ENCODE measurements at regions of chr17 and their contacts with region 1.

Region 1: GRCh38 chr17:77322514-77323412 is 182.0 kb downstream of the SEC14L1 start:
- DNase-seq: peak; percentile 97
- H3K4me3 ChIP-seq: peak overlapping the region; percentile 72
- CTCF ChIP-seq: no peak

Region 2: GRCh38 chr17:77285520-77286390 is 37.0 kb before region 1 on chr17:
- CTCF ChIA-PET with region 1: interaction called, 3 read pairs
- POLR2A ChIA-PET with region 1: interaction called, 38 read pairs
- DNase-seq: peak; percentile 89
- H3K4me3 ChIP-seq: no peak overlapping the region
- CTCF ChIP-seq: no peak

Region 3: DNA sequence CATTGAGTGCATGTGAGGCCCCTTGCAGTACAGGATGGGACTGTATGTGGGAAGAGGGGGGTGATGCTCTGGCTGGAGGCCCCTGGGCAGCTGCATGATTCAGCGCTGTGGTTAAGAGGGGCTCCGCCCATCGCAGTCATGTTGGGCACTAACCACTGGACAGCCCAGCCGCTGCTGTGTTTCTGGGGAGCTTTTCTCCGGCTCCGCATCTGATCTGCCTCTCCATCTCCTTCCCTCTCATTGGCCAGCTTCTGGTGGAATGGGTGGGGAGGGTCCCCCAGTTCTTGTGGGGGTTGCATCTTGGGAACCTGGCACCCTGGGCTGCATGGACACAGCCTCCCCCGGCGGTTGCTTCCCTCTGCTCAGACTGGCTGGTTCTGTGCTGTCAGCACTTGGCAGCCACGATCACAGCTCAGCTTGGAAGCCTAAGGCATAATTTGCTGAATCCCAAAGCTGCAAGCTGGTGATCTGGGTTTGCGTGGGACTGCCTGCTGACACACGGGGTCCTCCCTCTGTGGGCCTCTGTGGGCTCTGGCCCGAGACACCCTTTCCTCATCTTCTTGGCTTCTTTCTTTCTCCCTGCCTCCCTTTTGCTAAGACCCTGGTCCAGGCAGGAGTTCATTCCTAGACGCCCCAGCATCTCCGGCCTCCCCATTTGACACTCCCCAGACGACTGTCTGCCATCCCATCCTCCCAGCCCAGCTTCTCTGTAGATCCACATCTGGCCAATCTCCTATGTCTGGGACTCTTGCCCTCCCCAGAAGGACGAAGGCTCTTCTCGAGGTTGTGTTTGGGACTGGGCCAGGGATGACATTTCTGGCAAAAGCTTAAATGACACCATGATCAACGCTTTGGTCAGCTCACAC is 13.7 kb before region 1 on chr17:
- CTCF ChIA-PET with region 1: interaction called, 3 read pairs
- POLR2A ChIA-PET with region 1: interaction called, 11 read pairs
- DNase-seq: no peak
- H3K4me3 ChIP-seq: no peak overlapping the region
- CTCF ChIP-seq: no peak

Region 4: DNA sequence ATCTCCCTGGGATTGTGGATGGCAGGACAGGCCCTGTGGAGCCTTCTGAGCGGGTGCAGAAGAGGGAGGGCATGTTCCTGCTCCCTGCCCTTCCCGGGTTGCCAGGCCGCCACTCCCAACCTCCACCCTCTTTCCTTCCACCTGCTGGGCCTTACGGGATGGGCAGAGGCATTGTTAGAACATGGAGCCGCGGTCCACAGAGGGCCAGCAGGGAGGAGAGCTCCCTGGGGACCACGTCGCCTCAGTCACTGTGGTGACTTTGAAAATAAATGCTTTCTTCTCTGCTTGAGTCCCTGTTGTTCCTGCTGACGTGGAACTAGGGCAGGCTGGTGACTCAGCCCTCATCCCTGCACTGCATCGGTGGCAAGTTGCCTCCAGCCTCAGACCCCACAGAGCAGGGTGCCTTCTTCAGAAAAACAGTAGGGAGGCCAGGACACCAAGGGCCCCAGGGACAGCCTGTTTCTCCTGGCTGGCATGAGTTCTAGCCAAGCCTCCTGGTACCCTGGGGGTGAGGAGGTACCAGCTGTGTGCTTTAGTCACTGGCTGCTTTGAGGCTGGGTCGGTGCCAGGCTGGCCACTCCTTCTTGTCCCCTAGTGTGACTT is 42.9 kb after region 1 on chr17:
- CTCF ChIA-PET with region 1: no interaction called
- POLR2A ChIA-PET with region 1: no interaction called
- DNase-seq: peak; percentile 63
- H3K4me3 ChIP-seq: no peak overlapping the region
- CTCF ChIP-seq: no peak